ENCODE measurements at regions of chr5 and their contacts with region 1.

Region 1: DNA sequence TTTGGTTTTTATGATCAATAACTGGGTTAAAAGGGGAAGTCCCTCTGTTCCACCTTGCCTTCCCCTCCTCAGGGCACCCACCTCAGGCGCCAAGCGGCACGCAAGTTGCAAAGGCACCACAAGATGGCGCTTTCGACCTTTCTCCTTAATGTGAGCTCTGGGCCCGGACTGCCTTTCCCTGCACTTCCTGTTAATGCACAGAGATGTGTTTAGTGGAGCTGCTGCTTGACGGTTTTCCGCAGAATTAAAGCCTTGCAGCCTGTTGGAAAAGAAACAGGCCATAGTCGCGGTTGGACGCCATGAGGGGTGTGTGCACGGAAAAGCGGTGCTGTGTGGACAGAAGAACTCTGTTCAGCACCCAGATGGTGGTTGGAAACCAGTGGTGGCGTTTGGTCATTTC is 17.9 kb downstream of the CXCL14 start:
- DNase-seq: peak; percentile 84
- H3K4me3 Mint-ChIP-seq: no peak overlapping the region
- H3K27ac Mint-ChIP-seq: no peak overlapping the region
- H3K4me1 Mint-ChIP-seq: peaks cover 5% of the 10 kb centered on the region
- H3K27me3 Mint-ChIP-seq: peaks cover 24% of the 10 kb centered on the region

Region 2: GRCh38 chr5:135457424-135458071 is 103.3 kb before region 1 on chr5:
- CTCF ChIA-PET with region 1: interaction called, 434 read pairs
- POLR2A ChIA-PET with region 1: interaction called, 3 read pairs
- intact Hi-C with region 1: no loop called
- DNase-seq: peak; percentile 75
- H3K4me3 Mint-ChIP-seq: no peak overlapping the region
- H3K27ac Mint-ChIP-seq: no peak overlapping the region
- H3K4me1 Mint-ChIP-seq: no peaks in the 10 kb centered on the region
- H3K27me3 Mint-ChIP-seq: peaks cover 14% of the 10 kb centered on the region

Region 3: GRCh38 chr5:135829681-135830383 is 269.0 kb after region 1 on chr5:
- CTCF ChIA-PET with region 1: interaction called, 17 read pairs
- POLR2A ChIA-PET with region 1: no interaction called
- intact Hi-C with region 1: loop called (anchors 1 kb)
- DNase-seq: peak; percentile 64
- H3K4me3 Mint-ChIP-seq: no peak overlapping the region
- H3K27ac Mint-ChIP-seq: no peak overlapping the region
- H3K4me1 Mint-ChIP-seq: peaks cover 6% of the 10 kb centered on the region
- H3K27me3 Mint-ChIP-seq: peaks cover 41% of the 10 kb centered on the region

Measured in activated CD4-positive, alpha-beta memory T cell treated with anti-CD3 and anti-CD28 coated beads for 36 hours (primary cell).